ENCODE measurements at regions of chr16 and their contacts with region 1.

Region 1: GRCh38 chr16:80002261-80002660 is 401.7 kb upstream of the MAF start:
- DNase-seq: no peak
- H3K4me3 ChIP-seq: no peak overlapping the region
- H3K27ac ChIP-seq: no peak overlapping the region
- H3K4me1 ChIP-seq: peaks cover 5% of the 10 kb centered on the region
- H3K27me3 ChIP-seq: no peaks in the 10 kb centered on the region
- CTCF ChIP-seq: no peak
- EP300 ChIP-seq: no peak
- POLR2A ChIP-seq: no peak

Region 2: GRCh38 chr16:78045865-78046581 is 1956.2 kb before region 1 on chr16:
- intact Hi-C with region 1: loop called in 1 of 4 experiments (anchors 5 kb)
- DNase-seq: peak; percentile 22 to 77 (median 61)
- H3K4me3 ChIP-seq: no peak overlapping the region
- H3K27ac ChIP-seq: no peak overlapping the region
- H3K4me1 ChIP-seq: peaks cover 3% of the 10 kb centered on the region
- H3K27me3 ChIP-seq: no peaks in the 10 kb centered on the region
- CTCF ChIP-seq: no peak
- EP300 ChIP-seq: no peak
- POLR2A ChIP-seq: no peak

Region 3: DNA sequence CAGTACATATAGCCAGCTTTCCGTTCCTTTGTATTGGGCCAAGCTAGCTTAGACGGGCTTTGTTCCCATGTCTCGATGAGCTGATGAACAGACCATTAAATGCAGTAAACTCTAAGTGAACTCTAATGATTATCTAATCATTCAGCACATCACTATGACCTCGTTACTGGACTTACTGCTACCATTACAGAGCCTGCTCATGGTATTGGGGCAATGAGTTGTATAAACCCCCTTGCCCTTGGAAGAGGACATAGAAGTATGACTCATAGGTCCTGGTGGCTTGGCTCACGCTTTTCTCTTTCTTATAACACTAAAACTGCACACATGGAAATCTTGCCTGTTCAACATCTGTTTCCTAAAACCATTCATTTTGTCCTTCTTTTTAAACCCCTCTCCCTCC is 445.0 kb after region 1 on chr16:
- intact Hi-C with region 1: no loop called
- DNase-seq: no peak
- H3K4me3 ChIP-seq: no peak overlapping the region
- H3K27ac ChIP-seq: no peak overlapping the region
- H3K4me1 ChIP-seq: no peaks in the 10 kb centered on the region
- H3K27me3 ChIP-seq: no peaks in the 10 kb centered on the region
- CTCF ChIP-seq: no peak
- EP300 ChIP-seq: no peak
- POLR2A ChIP-seq: no peak

Measured in ovary (tissue), 10 donors.